CD4-positive, alpha-beta T cell (primary cell): ENCODE measurements at regions of chr1 and their contacts with region 1.

Region 1: GRCh38 chr1:145845514-145846161 is at the start of gene NUDT17:
- DNase-seq: peak; percentile 63 to 88 (median 74)
- ATAC-seq: peak; percentile 80
- H3K4me3 ChIP-seq: peak within 1 kb of the TSS; percentile 77
- H3K4me3 Mint-ChIP-seq: no peak within 1 kb of the TSS
- H3K27ac ChIP-seq: no peak within 1 kb of the TSS
- H3K27ac Mint-ChIP-seq: peak within 1 kb of the TSS; percentile 40
- H3K4me1 ChIP-seq: peaks cover 20% of the 10 kb centered on the region
- H3K4me1 Mint-ChIP-seq: peaks cover 11% of the 10 kb centered on the region
- H3K27me3 ChIP-seq: no peaks in the 10 kb centered on the region
- H3K27me3 Mint-ChIP-seq: no peaks in the 10 kb centered on the region
- CTCF ChIP-seq: peak; percentile 96
- total RNA-seq, gene NUDT17: 1.6 to 2.8 TPM

Region 2: GRCh38 chr1:145871994-145872924 is 26.6 kb after region 1 on chr1:
- CTCF ChIA-PET with region 1: interaction called, 26 read pairs
- POLR2A ChIA-PET with region 1: interaction called, 21 read pairs
- intact Hi-C with region 1: no loop called
- DNase-seq: peak in 13 of 14 experiments; percentile 12 to 60 (median 36)
- ATAC-seq: peak; percentile 76
- H3K4me3 ChIP-seq: peak overlapping the region; percentile 49
- H3K4me3 Mint-ChIP-seq: peak overlapping the region; percentile 83
- H3K27ac ChIP-seq: no peak overlapping the region
- H3K27ac Mint-ChIP-seq: peak overlapping the region; percentile 50
- H3K4me1 ChIP-seq: peaks cover 17% of the 10 kb centered on the region
- H3K4me1 Mint-ChIP-seq: peaks cover 18% of the 10 kb centered on the region
- H3K27me3 ChIP-seq: peaks cover 0 to 2% of the 10 kb centered on the region in 2 experiments
- H3K27me3 Mint-ChIP-seq: no peaks in the 10 kb centered on the region
- CTCF ChIP-seq: no peak

Region 3: GRCh38 chr1:145906954-145907753 is 61.5 kb after region 1 on chr1:
- CTCF ChIA-PET with region 1: interaction called, 16 read pairs
- POLR2A ChIA-PET with region 1: interaction called, 4 read pairs
- intact Hi-C with region 1: loop called (anchors 1 to 2 kb)
- DNase-seq: no peak
- ATAC-seq: no peak
- H3K4me3 ChIP-seq: no peak overlapping the region
- H3K4me3 Mint-ChIP-seq: no peak overlapping the region
- H3K27ac ChIP-seq: no peak overlapping the region
- H3K27ac Mint-ChIP-seq: no peak overlapping the region
- H3K4me1 ChIP-seq: peaks cover 3% of the 10 kb centered on the region
- H3K4me1 Mint-ChIP-seq: peaks cover 6% of the 10 kb centered on the region
- H3K27me3 ChIP-seq: no peaks in the 10 kb centered on the region
- H3K27me3 Mint-ChIP-seq: no peaks in the 10 kb centered on the region
- CTCF ChIP-seq: no peak

Region 4: GRCh38 chr1:145963995-145964901 is 118.6 kb after region 1 on chr1 and contains the starts of genes ANKRD34A and POLR3GL:
- CTCF ChIA-PET with region 1: interaction called, 13 read pairs
- POLR2A ChIA-PET with region 1: interaction called, 9 read pairs
- intact Hi-C with region 1: no loop called
- DNase-seq: peak; percentile 75 to 96 (median 88)
- ATAC-seq: peak; percentile 90
- H3K4me3 ChIP-seq: peak within 1 kb of the TSS; percentile 72
- H3K4me3 Mint-ChIP-seq: peak within 1 kb of the TSS; percentile 94
- H3K27ac ChIP-seq: peak within 1 kb of the TSS; percentile 58 to 62
- H3K27ac Mint-ChIP-seq: peak within 1 kb of the TSS; percentile 94
- H3K4me1 ChIP-seq: peaks cover 58% of the 10 kb centered on the region
- H3K4me1 Mint-ChIP-seq: peaks cover 58% of the 10 kb centered on the region
- H3K27me3 ChIP-seq: no peaks in the 10 kb centered on the region
- H3K27me3 Mint-ChIP-seq: no peaks in the 10 kb centered on the region
- CTCF ChIP-seq: no peak
- total RNA-seq, gene ANKRD34A: 0.42 to 0.47 TPM
- total RNA-seq, gene POLR3GL: 17.2 to 17.8 TPM

Region 5: GRCh38 chr1:146012737-146013403 is 167.2 kb after region 1 on chr1:
- CTCF ChIA-PET with region 1: interaction called, 32 read pairs
- POLR2A ChIA-PET with region 1: interaction called, 15 read pairs
- intact Hi-C with region 1: loop called (anchors 1 kb)
- DNase-seq: peak in 12 of 14 experiments; percentile 26 to 85 (median 50)
- ATAC-seq: peak; percentile 73
- H3K4me3 ChIP-seq: no peak overlapping the region
- H3K4me3 Mint-ChIP-seq: no peak overlapping the region
- H3K27ac ChIP-seq: no peak overlapping the region
- H3K27ac Mint-ChIP-seq: no peak overlapping the region
- H3K4me1 ChIP-seq: peaks cover 1% of the 10 kb centered on the region
- H3K4me1 Mint-ChIP-seq: peaks cover 11% of the 10 kb centered on the region
- H3K27me3 ChIP-seq: peaks cover 0 to 3% of the 10 kb centered on the region in 2 experiments
- H3K27me3 Mint-ChIP-seq: peaks cover 8% of the 10 kb centered on the region
- CTCF ChIP-seq: peak; percentile 95